HEK293T (cell line): ENCODE measurements at regions of chr2 and their contacts with region 1.

Region 1: DNA sequence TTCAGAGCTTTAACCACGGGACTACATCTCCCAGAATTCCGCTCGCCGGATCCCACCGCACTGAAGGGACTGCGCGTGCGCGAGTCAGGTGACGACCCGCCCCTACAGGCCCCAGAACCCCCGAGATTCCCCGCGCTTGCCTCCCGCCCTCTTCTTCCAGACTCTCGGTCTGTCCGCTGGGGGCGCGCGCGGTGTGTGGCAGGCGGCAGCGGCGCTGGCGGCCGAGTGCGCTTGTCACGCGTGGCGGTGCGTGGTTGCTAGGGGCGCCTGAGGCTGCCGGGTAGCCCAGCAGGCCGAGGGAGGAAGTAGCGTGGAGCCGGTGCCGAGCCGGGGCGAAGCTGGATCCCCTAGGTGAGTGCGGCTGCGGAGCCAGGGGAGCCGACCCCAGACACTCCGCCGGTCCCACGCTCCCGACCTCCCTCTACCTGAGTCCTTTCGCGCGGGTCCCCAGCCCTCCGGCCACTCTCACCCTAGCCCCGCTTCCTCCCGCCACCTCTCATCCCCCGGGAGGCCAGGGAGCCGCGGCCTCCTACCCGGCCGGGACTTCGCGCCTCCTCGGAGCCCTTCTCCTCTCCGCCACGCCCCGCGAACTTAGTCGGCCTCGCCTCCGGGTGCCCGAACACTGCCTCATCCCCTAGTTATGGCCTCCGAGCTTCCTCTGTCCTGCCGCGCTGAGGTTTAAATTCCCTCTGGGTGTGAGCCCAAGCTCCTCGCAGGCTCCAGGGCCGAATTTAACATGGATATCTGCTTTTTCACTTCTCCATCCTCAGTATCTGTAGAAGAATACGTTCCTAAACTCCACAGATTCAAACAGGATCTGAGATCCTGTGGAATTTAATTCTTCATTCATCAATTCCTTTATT is at the start of gene TTLL4:
- DNase-seq: peak; percentile 99

Region 2: GRCh38 chr2:218582076-218582475 is 128.8 kb before region 1 on chr2:
- CTCF ChIA-PET with region 1: no interaction called
- POLR2A ChIA-PET with region 1: no interaction called
- DNase-seq: no peak

Region 3: DNA sequence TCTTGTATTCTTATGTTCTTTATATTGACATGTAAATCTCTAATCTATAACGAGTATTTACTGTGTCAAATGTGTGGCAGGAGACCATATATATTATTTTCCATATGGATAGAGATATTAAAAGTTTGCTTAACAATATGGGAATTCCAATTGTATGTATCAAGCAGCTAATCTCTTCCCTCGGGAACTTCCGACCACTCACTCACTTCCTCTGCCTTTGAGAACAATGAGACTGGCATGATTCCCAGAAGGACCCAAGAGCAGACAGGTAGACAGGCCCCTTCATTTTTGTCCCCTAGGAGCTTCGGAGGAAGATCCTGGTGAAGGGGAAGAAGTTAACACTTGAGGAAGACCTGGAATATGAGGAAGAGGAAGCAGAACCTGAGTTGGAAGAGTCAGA is 79.1 kb before region 1 on chr2:
- CTCF ChIA-PET with region 1: no interaction called
- POLR2A ChIA-PET with region 1: no interaction called
- DNase-seq: no peak

Region 4: GRCh38 chr2:218722876-218723785 is 12.2 kb after region 1 on chr2:
- CTCF ChIA-PET with region 1: interaction called, 5 read pairs
- POLR2A ChIA-PET with region 1: interaction called, 11 read pairs
- DNase-seq: no peak

Region 5: GRCh38 chr2:218852911-218853667 is 142.2 kb after region 1 on chr2:
- CTCF ChIA-PET with region 1: interaction called, 12 read pairs
- POLR2A ChIA-PET with region 1: no interaction called
- DNase-seq: peak; percentile 66